HAP-1 (cell line): ENCODE measurements at regions of chr20 and their contacts with region 1.

Region 1: DNA sequence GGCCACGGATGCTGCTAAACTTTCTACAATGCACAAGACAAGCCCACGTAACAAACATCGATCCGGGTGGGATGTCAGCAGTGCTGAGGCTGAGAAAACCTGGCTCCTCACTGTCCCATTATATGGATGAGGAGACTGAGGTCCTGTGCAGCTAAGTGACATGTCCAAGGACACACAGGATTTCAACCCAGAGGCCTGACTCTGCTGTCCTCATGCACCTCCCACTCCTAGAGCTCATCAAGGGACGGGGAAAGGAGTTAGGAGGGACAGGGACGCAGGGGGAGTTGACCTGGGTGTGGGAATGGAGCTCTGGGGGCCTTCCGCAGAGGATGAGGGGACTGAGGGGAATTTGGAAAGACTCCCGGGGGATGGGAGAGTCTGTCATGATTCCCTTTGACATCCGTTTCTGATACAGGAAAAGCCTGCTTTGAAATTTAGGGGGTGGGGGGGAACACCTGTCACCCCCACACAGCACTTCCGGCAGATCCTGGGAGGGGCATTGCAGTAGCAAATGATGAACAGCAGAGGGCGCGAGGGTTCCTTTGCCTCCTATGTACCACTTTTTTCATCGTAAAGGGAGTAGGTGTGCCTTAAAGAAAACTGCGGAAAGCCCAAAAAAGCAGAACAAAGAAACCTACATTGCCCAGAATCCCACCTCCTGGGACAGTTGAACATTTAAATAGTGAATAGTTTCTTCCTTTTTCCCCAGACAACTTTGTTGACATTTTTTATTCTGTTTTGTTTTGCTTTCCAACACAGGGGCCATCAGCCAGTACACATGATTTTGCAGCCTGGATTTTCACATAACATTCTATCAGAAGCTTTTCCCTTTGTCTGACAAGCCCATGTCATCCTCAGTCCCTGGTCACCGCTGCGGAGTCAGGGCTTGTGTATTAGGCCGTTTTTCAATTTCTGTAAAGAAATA is 48.6 kb downstream of the SLC2A10 start:
- DNase-seq: peak; percentile 15 to 72
- H3K4me3 ChIP-seq: no peak overlapping the region
- H3K4me1 ChIP-seq: no peaks in the 10 kb centered on the region
- H3K27me3 ChIP-seq: peaks cover 4% of the 10 kb centered on the region; the same call in 1 of the 2 replicates

Region 2: GRCh38 chr20:46689082-46689754 is 68.8 kb before region 1 on chr20 and contains the start of gene TP53RK:
- in situ Hi-C with region 1: no loop called
- DNase-seq: peak; percentile 99
- H3K4me3 ChIP-seq: peak within 1 kb of the TSS; percentile 83
- H3K4me1 ChIP-seq: peaks cover 12% of the 10 kb centered on the region; the same call in 1 of the 2 replicates
- H3K27me3 ChIP-seq: no peaks in the 10 kb centered on the region

Region 3: GRCh38 chr20:47019121-47019824 is 261.3 kb after region 1 on chr20:
- in situ Hi-C with region 1: no loop called
- DNase-seq: no peak
- H3K4me3 ChIP-seq: no peak overlapping the region
- H3K4me1 ChIP-seq: no peaks in the 10 kb centered on the region
- H3K27me3 ChIP-seq: no peaks in the 10 kb centered on the region

Region 4: GRCh38 chr20:47150403-47151152 is 392.6 kb after region 1 on chr20:
- in situ Hi-C with region 1: loop called (anchors 5 kb)
- DNase-seq: peak; percentile 78 to 83
- H3K4me3 ChIP-seq: no peak overlapping the region
- H3K4me1 ChIP-seq: no peaks in the 10 kb centered on the region
- H3K27me3 ChIP-seq: 0 out of 2 replicates have a peak, but pooled peaks cover 3% of the 10 kb centered on the region